T-cell (primary cell): ENCODE measurements at regions of chr5 and their contacts with region 1.

Region 1: DNA sequence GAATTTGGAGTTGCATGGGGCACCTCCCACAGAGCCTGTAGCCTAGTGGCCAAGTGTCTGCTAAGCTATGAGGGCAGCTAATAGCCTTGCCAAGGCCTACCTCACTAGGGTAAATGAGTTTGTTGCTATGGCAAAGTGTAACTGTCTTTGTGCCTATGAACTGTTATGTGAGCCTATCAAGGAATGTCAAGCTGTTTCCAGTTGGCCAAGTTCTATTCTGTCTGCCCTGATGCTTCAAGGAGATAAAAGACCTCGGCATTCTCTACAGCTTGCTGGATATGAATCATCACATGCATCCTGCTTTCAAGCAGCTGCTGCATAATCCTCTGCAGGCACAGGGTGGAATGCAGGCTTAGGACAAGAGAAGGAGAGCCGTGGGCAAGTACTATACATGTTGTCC is 69.8 kb upstream of the CCDC112 start:
- DNase-seq: no peak
- ATAC-seq: no peak
- H3K4me3 ChIP-seq: no peak overlapping the region
- H3K4me3 Mint-ChIP-seq: no peak overlapping the region
- H3K27ac ChIP-seq: no peak overlapping the region
- H3K27ac Mint-ChIP-seq: no peak overlapping the region
- H3K4me1 ChIP-seq: no peaks in the 10 kb centered on the region
- H3K4me1 Mint-ChIP-seq: no peaks in the 10 kb centered on the region
- H3K27me3 ChIP-seq: peaks cover 0 to 12% of the 10 kb centered on the region in 2 experiments
- H3K27me3 Mint-ChIP-seq: peaks cover 5 to 17% of the 10 kb centered on the region in 2 donors

Region 2: DNA sequence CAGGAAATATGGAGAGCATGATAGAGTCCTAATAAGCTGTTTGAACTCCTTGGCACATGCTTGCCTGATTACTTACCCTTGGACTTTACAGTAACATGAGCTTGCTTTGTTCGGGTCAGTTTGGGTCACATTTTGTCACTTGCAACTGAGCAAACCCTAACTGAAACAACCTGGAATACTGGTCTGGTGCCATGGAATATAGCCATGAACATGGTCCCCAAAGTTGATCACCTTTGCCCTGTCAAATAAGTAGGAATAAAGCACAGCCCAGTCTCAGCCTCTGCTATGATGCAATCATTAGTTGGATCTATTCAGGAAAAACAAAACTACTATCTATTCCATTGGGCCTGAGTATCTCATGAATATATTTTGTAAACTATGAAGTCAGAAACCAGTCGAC is 432.0 kb after region 1 on chr5:
- CTCF ChIA-PET with region 1: no interaction called
- POLR2A ChIA-PET with region 1: interaction called in 1 of 2 experiments, 11 read pairs
- DNase-seq: no peak
- ATAC-seq: no peak
- H3K4me3 ChIP-seq: no peak overlapping the region
- H3K4me3 Mint-ChIP-seq: no peak overlapping the region
- H3K27ac ChIP-seq: no peak overlapping the region
- H3K27ac Mint-ChIP-seq: no peak overlapping the region
- H3K4me1 ChIP-seq: no peaks in the 10 kb centered on the region
- H3K4me1 Mint-ChIP-seq: no peaks in the 10 kb centered on the region
- H3K27me3 ChIP-seq: peaks cover 0 to 2% of the 10 kb centered on the region in 2 experiments
- H3K27me3 Mint-ChIP-seq: peaks cover 4 to 37% of the 10 kb centered on the region in 2 donors

Region 3: GRCh38 chr5:116976767-116977166 is 1610.5 kb after region 1 on chr5:
- CTCF ChIA-PET with region 1: no interaction called
- POLR2A ChIA-PET with region 1: no interaction called
- DNase-seq: no peak
- ATAC-seq: no peak
- H3K4me3 ChIP-seq: no peak overlapping the region
- H3K4me3 Mint-ChIP-seq: no peak overlapping the region
- H3K27ac ChIP-seq: no peak overlapping the region
- H3K27ac Mint-ChIP-seq: no peak overlapping the region
- H3K4me1 ChIP-seq: no peaks in the 10 kb centered on the region
- H3K4me1 Mint-ChIP-seq: no peaks in the 10 kb centered on the region
- H3K27me3 ChIP-seq: no peaks in the 10 kb centered on the region
- H3K27me3 Mint-ChIP-seq: no peaks in the 10 kb centered on the region